Naive thymus-derived CD8-positive, alpha-beta T cell (primary cell): ENCODE measurements at regions of chr3 and their contacts with region 1.

Region 1: DNA sequence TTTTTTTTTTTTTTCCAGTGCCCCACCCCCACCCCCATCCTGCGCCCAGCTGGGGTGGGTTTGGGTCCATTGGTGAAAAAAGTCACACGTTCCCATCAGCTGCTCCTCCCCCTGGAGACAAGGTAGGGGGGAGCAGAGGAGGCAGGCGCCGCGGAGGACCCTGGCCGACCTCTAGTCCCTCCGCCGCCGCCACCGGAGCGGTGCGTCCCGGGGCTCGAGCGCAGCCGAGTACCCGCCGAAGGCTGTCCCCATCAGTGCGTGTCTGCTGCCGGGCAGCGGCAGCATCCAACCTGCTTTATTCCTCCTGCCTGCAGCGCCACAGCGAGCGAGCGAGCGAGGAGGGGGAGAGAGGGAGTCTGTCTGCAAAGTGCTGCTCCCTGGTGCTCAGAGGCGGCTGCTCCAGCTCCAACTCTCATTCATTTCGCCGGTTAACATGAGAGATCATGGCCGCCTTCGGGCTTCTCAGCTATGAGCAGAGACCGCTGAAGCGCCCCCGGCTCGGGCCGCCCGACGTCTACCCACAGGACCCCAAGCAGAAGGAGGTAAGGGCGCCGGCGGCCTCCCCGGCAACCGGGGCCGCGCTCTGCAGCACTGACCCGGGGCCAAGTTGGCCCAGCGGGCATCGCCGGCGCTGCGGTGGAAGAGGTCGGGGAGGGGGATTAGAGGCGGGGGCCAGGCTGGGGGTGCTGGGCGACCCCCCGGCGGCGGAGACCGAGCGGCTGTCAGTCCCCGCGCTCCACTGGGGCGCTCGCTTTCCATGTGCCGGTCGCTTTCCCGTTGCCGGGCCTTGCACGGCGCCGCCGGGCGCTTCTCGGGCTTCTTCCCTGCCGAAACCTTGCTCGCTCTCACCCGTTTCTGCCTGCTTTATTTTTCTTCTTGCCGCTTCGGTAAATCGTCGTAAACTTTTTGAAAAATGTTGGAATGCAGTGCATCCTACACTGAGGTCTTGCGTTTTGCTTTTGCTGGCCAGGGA is 1.3 kb downstream of the MED12L start:
- DNase-seq: peak; percentile 37 to 84 (median 63)
- ATAC-seq: peak; percentile 87 to 89
- H3K4me3 Mint-ChIP-seq: peak overlapping the region; percentile 85 to 95 (median 92)
- H3K27ac Mint-ChIP-seq: peak overlapping the region in 6 of 10 donors; percentile 24 to 81 (median 64)
- H3K4me1 Mint-ChIP-seq: peaks cover 3 to 12% (median 11%) of the 10 kb centered on the region in 4 donors
- H3K27me3 Mint-ChIP-seq: peaks cover 15 to 39% (median 30%) of the 10 kb centered on the region in 5 donors

Region 2: DNA sequence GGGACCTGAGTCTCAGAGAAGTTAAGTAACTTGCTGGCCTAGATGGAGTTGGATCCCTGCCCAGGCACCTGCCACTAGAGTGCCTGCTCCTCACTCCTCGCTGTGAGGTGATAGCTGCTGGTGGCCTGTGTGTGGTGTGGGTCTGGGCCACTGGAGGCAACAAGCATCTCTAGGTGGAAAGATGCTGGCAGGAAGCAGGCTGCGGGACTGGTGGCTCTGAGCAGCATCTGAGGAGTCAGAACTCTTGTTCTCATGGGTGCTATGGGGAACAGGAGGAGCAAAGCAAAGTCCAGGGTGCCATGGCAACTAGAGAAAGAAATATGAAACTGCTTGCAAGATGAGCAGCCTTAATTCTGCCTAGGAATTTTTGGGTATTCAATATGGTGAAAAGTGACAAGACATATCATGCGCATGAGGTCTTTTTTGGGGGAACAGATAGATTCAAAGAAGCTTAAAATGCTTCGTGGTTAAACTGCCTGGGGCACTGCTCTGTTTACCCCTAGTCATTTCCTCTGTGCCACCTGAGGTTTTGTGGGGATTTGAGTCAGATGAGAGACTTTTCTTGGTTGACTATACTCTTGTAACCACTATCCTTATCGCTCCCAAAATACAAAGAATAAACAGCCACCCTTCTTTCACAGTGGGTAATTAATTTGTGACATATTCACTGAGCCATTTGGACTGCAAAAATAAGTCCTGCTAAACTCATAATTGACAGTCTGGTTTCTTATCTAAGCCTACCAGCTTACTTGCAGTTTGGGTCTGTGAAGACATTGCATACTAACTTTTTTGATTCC is 49.0 kb after region 1 on chr3:
- POLR2A ChIA-PET with region 1: interaction called, 16 read pairs
- DNase-seq: peak in 9 of 10 donors; percentile 5 to 77 (median 51)
- ATAC-seq: peak; percentile 88 to 90
- H3K4me3 Mint-ChIP-seq: peak overlapping the region; percentile 43 to 83 (median 68)
- H3K27ac Mint-ChIP-seq: peak overlapping the region; percentile 80 to 96 (median 92)
- H3K4me1 Mint-ChIP-seq: peaks cover 20 to 31% (median 28%) of the 10 kb centered on the region in 4 donors
- H3K27me3 Mint-ChIP-seq: no peaks in the 10 kb centered on the region